ENCODE measurements at regions of chr20 and their contacts with region 1.

Region 1: DNA sequence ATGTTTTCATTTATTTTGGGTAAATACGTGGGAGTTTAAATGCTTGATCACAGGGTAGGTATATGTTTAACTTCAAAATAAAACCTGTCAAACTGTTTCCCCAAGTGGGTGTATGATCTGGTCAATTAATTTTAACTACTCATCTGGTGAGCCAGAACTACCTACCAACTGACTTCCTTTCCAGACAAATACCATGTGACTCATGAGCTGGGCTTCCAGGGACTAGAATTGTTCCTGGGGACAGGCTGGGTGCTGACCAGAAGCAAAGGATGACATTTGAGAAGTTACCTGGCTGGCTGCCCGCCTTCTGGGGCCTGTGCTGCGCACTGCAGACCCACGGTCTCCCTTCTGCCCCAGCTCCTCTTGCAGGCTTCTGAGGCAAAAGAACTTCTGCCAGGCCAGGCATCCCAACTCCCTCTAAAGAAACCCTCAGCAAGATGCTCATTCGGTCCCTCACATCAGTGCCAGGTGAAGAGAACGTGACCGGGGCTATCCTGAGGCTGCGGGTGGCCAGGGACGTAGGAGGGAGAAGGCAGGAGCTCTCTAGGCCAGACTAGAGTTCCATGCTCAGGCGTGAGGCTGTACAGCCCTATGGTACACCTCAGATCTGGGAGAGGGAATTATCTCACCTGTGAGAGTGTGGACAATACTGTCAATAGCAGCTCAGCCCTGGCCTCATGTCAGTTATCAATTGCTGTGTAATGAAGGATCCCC is 103.6 kb downstream of the JPH2 start:
- DNase-seq: peak; percentile 54 to 91
- H3K4me3 ChIP-seq: no peak overlapping the region
- H3K27ac ChIP-seq: no peak overlapping the region
- H3K4me1 ChIP-seq: peaks cover 16% of the 10 kb centered on the region
- H3K27me3 ChIP-seq: no peaks in the 10 kb centered on the region
- CTCF ChIP-seq: no peak
- POLR2A ChIP-seq: no peak

Region 2: DNA sequence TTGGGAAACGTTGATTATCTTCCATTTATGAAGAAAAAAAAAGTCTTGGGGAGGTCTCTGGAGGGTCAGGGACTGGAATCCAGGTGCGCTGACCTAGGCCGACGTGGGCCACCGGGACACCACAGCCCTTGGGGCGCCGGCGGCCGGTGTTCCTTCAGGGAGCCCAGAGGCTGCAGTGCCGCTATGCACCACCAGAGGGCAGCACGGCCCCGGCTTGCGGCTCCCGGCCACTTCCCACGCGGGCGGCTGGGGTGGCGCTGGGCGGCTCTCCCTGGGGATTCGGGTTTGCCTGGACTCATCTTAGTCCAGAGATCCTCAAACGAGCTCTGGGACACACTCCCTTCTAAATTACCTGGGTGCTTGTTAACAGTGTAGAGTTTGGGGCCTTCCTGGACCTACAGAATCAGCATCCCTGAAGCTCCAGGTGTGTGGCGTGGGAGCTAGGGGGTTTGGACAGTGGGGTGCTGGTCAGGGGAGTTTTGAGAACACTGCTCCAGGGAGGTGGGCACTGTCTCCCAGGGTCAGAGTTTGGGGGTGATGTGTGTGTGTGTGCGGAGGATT is 333.6 kb before region 1 on chr20:
- intact Hi-C with region 1: loop called (anchors 2 kb)
- DNase-seq: no peak
- H3K4me3 ChIP-seq: no peak overlapping the region
- H3K27ac ChIP-seq: no peak overlapping the region
- H3K4me1 ChIP-seq: no peaks in the 10 kb centered on the region
- H3K27me3 ChIP-seq: no peaks in the 10 kb centered on the region
- CTCF ChIP-seq: peak; percentile 93 to 99 (median 96)
- POLR2A ChIP-seq: no peak

Region 3: GRCh38 chr20:43983359-43983758 is 100.0 kb before region 1 on chr20:
- intact Hi-C with region 1: no loop called
- DNase-seq: no peak
- H3K4me3 ChIP-seq: no peak overlapping the region
- H3K27ac ChIP-seq: no peak overlapping the region
- H3K4me1 ChIP-seq: no peaks in the 10 kb centered on the region
- H3K27me3 ChIP-seq: no peaks in the 10 kb centered on the region
- CTCF ChIP-seq: no peak
- POLR2A ChIP-seq: no peak